ENCODE measurements at regions of chr6 and their contacts with region 1.

Region 1: GRCh38 chr6:26045065-26045927 is 41.9 kb upstream of the HFE start:
- DNase-seq: peak; percentile 45 to 95 (median 86)
- ATAC-seq: peak; percentile 58 to 63
- H3K4me3 Mint-ChIP-seq: peak overlapping the region; percentile 90 to 97 (median 92)
- H3K27ac Mint-ChIP-seq: peak overlapping the region; percentile 90 to 99 (median 96)
- H3K4me1 Mint-ChIP-seq: peaks cover 8 to 28% (median 14%) of the 10 kb centered on the region in 4 donors
- H3K27me3 Mint-ChIP-seq: no peaks in the 10 kb centered on the region

Region 2: GRCh38 chr6:25992413-25993037 is 52.8 kb before region 1 on chr6:
- POLR2A ChIA-PET with region 1: interaction called, 11 read pairs
- DNase-seq: peak; percentile 82 to 95 (median 94)
- ATAC-seq: peak; percentile 91 to 92
- H3K4me3 Mint-ChIP-seq: peak overlapping the region; percentile 93 to 98 (median 96)
- H3K27ac Mint-ChIP-seq: peak overlapping the region; percentile 91 to 98 (median 96)
- H3K4me1 Mint-ChIP-seq: peaks cover 8 to 39% (median 22%) of the 10 kb centered on the region in 4 donors
- H3K27me3 Mint-ChIP-seq: no peaks in the 10 kb centered on the region

Region 3: GRCh38 chr6:26003102-26003694 is 42.1 kb before region 1 on chr6:
- POLR2A ChIA-PET with region 1: no interaction called
- DNase-seq: peak; percentile 15 to 72 (median 42)
- ATAC-seq: peak; percentile 54 to 58
- H3K4me3 Mint-ChIP-seq: no peak overlapping the region
- H3K27ac Mint-ChIP-seq: no peak overlapping the region
- H3K4me1 Mint-ChIP-seq: peaks cover 0 to 8% (median 4%) of the 10 kb centered on the region in 4 donors
- H3K27me3 Mint-ChIP-seq: no peaks in the 10 kb centered on the region

Region 4: GRCh38 chr6:26103770-26104456 is 58.6 kb after region 1 on chr6:
- POLR2A ChIA-PET with region 1: interaction called, 53 read pairs
- DNase-seq: peak; percentile 71 to 97 (median 94)
- ATAC-seq: peak; percentile 91 to 92
- H3K4me3 Mint-ChIP-seq: peak overlapping the region; percentile 87 to 93 (median 89)
- H3K27ac Mint-ChIP-seq: peak overlapping the region; percentile 96 to 100 (median 98)
- H3K4me1 Mint-ChIP-seq: peaks cover 10 to 20% (median 14%) of the 10 kb centered on the region in 4 donors
- H3K27me3 Mint-ChIP-seq: peaks cover 0 to 4% (median 0%) of the 10 kb centered on the region in 5 donors

Region 5: GRCh38 chr6:26204332-26205165 is 159.3 kb after region 1 on chr6:
- POLR2A ChIA-PET with region 1: interaction called, 93 read pairs
- DNase-seq: peak; percentile 69 to 97 (median 88)
- ATAC-seq: peak; percentile 68 to 71
- H3K4me3 Mint-ChIP-seq: no peak overlapping the region
- H3K27ac Mint-ChIP-seq: no peak overlapping the region
- H3K4me1 Mint-ChIP-seq: peaks cover 14 to 36% (median 26%) of the 10 kb centered on the region in 4 donors
- H3K27me3 Mint-ChIP-seq: peaks cover 0 to 4% (median 0%) of the 10 kb centered on the region in 5 donors

Region 6: GRCh38 chr6:26285143-26286134 is 240.1 kb after region 1 on chr6:
- POLR2A ChIA-PET with region 1: interaction called, 10 read pairs
- DNase-seq: peak; percentile 80 to 99 (median 93)
- ATAC-seq: peak; percentile 77 to 87
- H3K4me3 Mint-ChIP-seq: peak overlapping the region; percentile 84 to 96 (median 91)
- H3K27ac Mint-ChIP-seq: peak overlapping the region; percentile 95 to 100 (median 98)
- H3K4me1 Mint-ChIP-seq: peaks cover 19 to 36% (median 29%) of the 10 kb centered on the region in 4 donors
- H3K27me3 Mint-ChIP-seq: peaks cover 0 to 7% (median 0%) of the 10 kb centered on the region in 5 donors

Region 7: DNA sequence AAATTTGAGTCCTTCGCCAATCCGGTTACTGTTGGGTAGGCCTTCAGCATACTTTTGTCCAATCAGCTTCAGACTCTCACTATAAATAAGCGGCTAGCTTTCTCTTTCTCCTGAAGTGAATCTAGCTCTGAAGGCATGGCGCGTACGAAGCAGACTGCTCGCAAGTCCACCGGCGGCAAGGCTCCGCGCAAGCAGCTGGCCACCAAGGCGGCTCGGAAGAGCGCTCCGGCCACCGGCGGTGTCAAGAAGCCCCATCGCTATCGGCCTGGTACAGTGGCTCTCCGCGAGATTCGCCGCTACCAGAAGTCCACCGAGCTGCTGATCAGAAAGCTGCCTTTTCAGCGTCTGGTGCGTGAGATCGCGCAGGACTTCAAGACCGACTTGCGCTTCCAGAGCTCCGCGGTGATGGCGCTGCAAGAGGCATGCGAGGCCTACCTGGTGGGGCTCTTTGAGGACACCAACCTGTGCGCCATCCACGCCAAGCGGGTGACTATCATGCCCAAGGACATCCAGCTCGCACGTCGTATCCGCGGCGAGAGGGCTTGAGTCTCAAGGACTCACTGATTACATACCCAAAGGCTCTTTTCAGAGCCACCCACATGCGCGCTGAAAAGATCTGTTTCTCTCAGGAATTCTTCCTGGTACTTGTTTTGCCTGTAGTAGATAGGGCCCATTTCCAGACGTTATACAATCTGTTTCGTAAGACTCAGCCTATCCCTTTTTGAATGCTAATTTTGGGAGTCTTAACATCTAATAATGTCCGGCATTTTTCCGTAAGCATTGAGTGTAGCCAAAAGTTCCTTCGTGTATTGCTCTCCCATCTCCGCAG is 1764.9 kb after region 1 on chr6:
- POLR2A ChIA-PET with region 1: interaction called, 12 read pairs
- DNase-seq: peak; percentile 58 to 95 (median 84)
- ATAC-seq: peak; percentile 63 to 65
- H3K4me3 Mint-ChIP-seq: peak overlapping the region; percentile 90 to 97 (median 96)
- H3K27ac Mint-ChIP-seq: peak overlapping the region; percentile 97 to 99 (median 98)
- H3K4me1 Mint-ChIP-seq: peaks cover 32 to 72% (median 47%) of the 10 kb centered on the region in 4 donors
- H3K27me3 Mint-ChIP-seq: no peaks in the 10 kb centered on the region

Measured in naive thymus-derived CD8-positive, alpha-beta T cell (primary cell).